Caco-2 (cell line): ENCODE measurements at regions of chr12 and their contacts with region 1.

Region 1: DNA sequence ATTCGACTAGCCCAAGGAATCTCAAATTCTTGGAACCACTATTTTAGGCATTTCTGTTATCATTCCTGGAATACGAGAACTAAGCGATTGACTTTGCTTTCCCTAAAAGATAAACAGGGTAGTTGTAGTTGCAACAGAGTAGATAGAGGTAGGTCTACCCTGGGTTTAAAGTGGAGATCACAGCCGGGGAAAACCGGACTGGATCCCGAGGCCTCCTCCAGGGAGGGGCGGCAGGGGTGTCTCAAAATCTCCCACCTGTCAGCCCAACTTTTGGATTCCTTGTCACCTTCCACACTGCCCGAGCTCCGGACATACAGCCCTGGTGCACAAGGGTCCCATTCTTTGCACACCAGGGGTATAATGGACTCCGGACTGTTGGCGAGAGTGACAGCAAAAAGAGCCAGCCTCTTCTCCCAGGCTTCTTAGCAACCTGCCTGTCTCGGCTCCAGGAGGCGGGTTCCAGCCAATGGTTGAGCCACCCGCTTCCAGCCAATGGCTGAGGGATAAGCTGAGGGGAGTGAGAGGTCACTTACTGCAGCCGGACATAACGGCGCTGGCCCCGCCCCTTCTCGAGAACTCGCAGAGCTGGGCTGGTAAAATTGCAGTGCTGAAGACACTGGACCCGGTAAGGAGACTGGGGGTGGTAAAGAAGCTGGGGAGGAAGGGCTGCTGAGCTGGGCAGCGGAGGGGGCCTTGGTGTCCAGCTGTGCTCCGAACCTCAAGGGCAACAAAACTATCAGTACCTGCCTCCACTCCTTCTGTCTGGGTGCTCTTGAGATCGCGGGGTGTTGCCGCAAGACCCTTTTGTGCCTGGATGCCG is at the start of gene SUOX:
- DNase-seq: peak; percentile 97 to 98
- H3K4me3 ChIP-seq: peak within 1 kb of the TSS; percentile 58
- H3K4me3 Mint-ChIP-seq: peak within 1 kb of the TSS; percentile 98
- H3K27ac Mint-ChIP-seq: peak within 1 kb of the TSS; percentile 87
- H3K4me1 ChIP-seq: peaks cover 9% of the 10 kb centered on the region
- H3K4me1 Mint-ChIP-seq: peaks cover 15% of the 10 kb centered on the region
- H3K27me3 ChIP-seq: no peaks in the 10 kb centered on the region
- H3K27me3 Mint-ChIP-seq: no peaks in the 10 kb centered on the region
- CTCF ChIP-seq: no peak
- total RNA-seq, gene SUOX: 37.9 and 40.8 TPM in 2 replicates

Region 2: GRCh38 chr12:55258303-55258702 is 738.6 kb before region 1 on chr12:
- CTCF ChIA-PET with region 1: no interaction called
- POLR2A ChIA-PET with region 1: no interaction called
- intact Hi-C with region 1: no loop called
- DNase-seq: no peak
- H3K4me3 ChIP-seq: no peak overlapping the region
- H3K4me3 Mint-ChIP-seq: no peak overlapping the region
- H3K27ac Mint-ChIP-seq: no peak overlapping the region
- H3K4me1 ChIP-seq: no peaks in the 10 kb centered on the region
- H3K4me1 Mint-ChIP-seq: no peaks in the 10 kb centered on the region
- H3K27me3 ChIP-seq: no peaks in the 10 kb centered on the region
- H3K27me3 Mint-ChIP-seq: no peaks in the 10 kb centered on the region
- CTCF ChIP-seq: no peak

Region 3: DNA sequence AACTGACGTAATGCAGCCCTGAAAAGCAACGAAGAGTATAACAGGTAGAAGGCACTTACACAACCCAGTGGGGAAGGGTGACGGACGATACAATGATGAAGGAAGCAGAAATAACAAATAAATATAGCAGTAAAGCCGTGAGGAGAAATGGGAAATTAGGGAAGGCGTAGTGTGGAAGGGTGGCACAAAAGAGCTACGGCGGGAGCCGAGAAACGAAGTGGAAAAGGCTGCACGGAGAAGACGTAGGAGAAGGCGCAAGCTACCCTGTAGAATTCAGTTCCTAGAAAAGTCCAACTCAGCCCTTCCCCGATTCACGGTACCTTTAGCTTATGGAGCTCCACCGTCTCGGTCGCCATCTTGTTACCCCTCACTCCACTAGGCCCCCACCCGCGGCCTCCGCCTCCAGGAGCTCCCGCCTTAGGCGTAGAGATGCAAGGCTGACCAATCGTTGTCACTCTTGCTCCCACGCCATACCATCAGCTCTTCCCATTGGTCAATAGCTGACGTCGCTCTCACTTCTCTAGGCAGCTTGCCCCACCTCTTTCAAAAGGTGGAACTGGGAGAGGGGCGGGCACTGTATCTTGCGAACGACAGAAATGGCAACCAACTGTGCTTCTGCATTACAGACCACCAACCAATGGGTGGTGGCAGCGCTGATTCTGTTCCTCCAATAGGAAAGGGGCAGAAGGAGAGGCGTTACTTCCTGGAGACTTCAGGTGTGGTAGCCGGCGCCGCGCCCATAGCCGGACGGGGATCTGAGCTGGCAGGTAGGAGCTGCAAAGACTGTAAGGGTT is 179.4 kb before region 1 on chr12 and contains the starts of genes ORMDL2 and SARNP:
- CTCF ChIA-PET with region 1: interaction called, 5 read pairs
- POLR2A ChIA-PET with region 1: interaction called, 10 read pairs
- intact Hi-C with region 1: no loop called
- DNase-seq: peak; percentile 97 to 99
- H3K4me3 ChIP-seq: peak within 1 kb of the TSS; percentile 83
- H3K4me3 Mint-ChIP-seq: no peak within 1 kb of the TSS
- H3K27ac Mint-ChIP-seq: no peak within 1 kb of the TSS
- H3K4me1 ChIP-seq: peaks cover 7% of the 10 kb centered on the region; the same call in 1 of the 2 replicates
- H3K4me1 Mint-ChIP-seq: peaks cover 30% of the 10 kb centered on the region
- H3K27me3 ChIP-seq: no peaks in the 10 kb centered on the region
- H3K27me3 Mint-ChIP-seq: no peaks in the 10 kb centered on the region
- CTCF ChIP-seq: no peak
- total RNA-seq, gene ORMDL2: 44.0 and 48.3 TPM in 2 replicates
- total RNA-seq, gene SARNP: 70.9 and 77.6 TPM in 2 replicates

Region 4: DNA sequence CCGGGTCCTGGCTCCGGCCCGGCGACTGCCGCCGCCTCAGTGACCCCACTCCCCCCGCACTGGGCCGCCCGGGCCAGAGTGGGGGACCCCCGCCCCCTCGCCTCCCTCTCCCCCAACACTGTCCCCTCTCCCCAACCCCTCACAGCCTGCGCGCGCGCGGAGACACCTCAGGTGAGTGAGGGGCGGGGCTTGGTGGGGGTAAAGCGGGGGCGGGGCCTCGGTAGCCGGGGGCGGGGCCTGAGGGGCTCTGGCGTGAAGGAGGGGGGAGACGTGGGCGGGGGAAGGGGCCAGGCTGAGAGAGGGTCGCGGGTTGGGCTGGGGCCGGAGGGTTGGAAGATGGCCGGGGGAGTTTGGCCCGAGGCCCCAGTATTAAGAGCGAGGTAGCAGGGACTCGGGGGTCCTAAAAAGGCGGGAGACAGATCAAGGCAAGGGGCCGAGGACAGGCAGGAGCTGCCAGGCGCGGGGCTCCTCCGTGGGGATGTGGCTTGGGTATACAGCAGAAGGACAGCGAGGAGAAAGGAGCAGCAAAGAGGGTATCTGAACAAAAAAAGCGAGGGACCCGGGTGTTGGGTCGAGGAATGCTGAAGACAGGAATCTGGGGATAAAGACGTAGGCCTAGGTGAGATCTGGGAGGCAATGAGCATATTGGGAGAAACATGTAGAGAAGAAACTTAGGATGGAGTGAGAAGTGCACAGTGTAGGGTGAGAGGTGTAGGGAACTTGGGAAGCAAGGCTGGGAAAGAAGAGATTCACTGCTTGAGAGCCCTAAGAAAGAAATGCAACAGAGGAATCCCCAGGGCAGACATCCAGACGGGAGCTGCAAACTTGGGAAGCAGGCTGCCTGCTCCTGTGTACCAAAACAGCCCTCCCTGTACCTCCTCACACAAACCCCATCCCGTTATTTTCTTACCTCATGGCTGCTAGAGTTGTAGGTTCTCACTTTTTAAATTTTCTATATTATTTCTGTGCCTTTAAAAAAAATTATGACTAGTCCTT is 10.9 kb after region 1 on chr12:
- CTCF ChIA-PET with region 1: interaction called, 20 read pairs
- POLR2A ChIA-PET with region 1: interaction called, 9 read pairs
- intact Hi-C with region 1: loop called (anchors 1 kb)
- DNase-seq: peak; percentile 75 to 81
- H3K4me3 ChIP-seq: peak overlapping the region; percentile 52
- H3K4me3 Mint-ChIP-seq: peak overlapping the region; percentile 93
- H3K27ac Mint-ChIP-seq: peak overlapping the region; percentile 82
- H3K4me1 ChIP-seq: peaks cover 54% of the 10 kb centered on the region
- H3K4me1 Mint-ChIP-seq: peaks cover 59% of the 10 kb centered on the region
- H3K27me3 ChIP-seq: no peaks in the 10 kb centered on the region
- H3K27me3 Mint-ChIP-seq: no peaks in the 10 kb centered on the region
- CTCF ChIP-seq: no peak

Region 5: GRCh38 chr12:56029666-56030293 is 32.9 kb after region 1 on chr12:
- CTCF ChIA-PET with region 1: interaction called, 97 read pairs
- POLR2A ChIA-PET with region 1: interaction called, 14 read pairs
- intact Hi-C with region 1: loop called (anchors 1 kb)
- DNase-seq: peak; percentile 64 to 78
- H3K4me3 ChIP-seq: no peak overlapping the region
- H3K4me3 Mint-ChIP-seq: peak overlapping the region; percentile 7
- H3K27ac Mint-ChIP-seq: peak overlapping the region; percentile 67
- H3K4me1 ChIP-seq: peaks cover 16% of the 10 kb centered on the region
- H3K4me1 Mint-ChIP-seq: peaks cover 16% of the 10 kb centered on the region
- H3K27me3 ChIP-seq: no peaks in the 10 kb centered on the region
- H3K27me3 Mint-ChIP-seq: no peaks in the 10 kb centered on the region
- CTCF ChIP-seq: peak; percentile 78 to 86

Region 6: DNA sequence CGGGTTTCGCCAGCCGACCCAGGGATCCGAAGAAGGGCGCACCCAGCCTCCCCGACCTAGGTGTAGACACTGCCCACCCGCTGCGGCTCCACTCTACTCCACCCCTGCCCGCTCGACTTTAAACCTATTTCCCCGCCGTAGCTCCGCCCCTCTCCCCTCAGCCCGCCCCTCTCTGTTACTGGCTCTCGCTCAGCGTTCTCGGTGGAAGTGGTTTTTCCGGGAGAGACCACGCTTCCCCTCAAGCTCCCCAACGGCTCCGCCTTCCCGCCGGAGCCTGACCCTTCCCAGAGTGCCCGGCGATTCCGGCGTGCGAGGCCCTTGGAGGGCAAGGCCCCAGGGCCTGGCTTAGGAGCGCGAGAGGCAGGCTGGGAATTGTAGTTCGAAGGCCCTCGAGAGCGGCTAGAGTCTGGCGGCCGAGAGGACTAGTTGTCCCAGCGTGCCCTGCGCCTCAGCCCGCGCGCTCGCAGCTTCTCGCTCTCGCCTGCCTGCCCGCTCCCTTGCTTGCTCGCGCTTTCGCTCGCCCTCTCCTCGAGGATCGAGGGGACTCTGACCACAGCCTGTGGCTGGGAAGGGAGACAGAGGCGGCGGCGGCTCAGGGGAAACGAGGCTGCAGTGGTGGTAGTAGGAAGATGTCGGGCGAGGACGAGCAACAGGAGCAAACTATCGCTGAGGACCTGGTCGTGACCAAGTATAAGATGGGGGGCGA is 107.3 kb after region 1 on chr12 and contains the start of gene PA2G4:
- CTCF ChIA-PET with region 1: interaction called, 6 read pairs
- POLR2A ChIA-PET with region 1: interaction called, 12 read pairs
- intact Hi-C with region 1: no loop called
- DNase-seq: peak; percentile 99
- H3K4me3 ChIP-seq: peak within 1 kb of the TSS; percentile 68
- H3K4me3 Mint-ChIP-seq: peak within 1 kb of the TSS; percentile 98
- H3K27ac Mint-ChIP-seq: peak within 1 kb of the TSS; percentile 99
- H3K4me1 ChIP-seq: peaks cover 22% of the 10 kb centered on the region
- H3K4me1 Mint-ChIP-seq: peaks cover 9% of the 10 kb centered on the region
- H3K27me3 ChIP-seq: no peaks in the 10 kb centered on the region; the same call in 1 of the 2 replicates
- H3K27me3 Mint-ChIP-seq: no peaks in the 10 kb centered on the region
- CTCF ChIP-seq: no peak
- total RNA-seq, gene PA2G4: 178 and 190 TPM in 2 replicates

Region 7: GRCh38 chr12:56420411-56420810 is 423.5 kb after region 1 on chr12:
- CTCF ChIA-PET with region 1: no interaction called
- POLR2A ChIA-PET with region 1: no interaction called
- intact Hi-C with region 1: no loop called
- DNase-seq: no peak
- H3K4me3 ChIP-seq: no peak overlapping the region
- H3K4me3 Mint-ChIP-seq: no peak overlapping the region
- H3K27ac Mint-ChIP-seq: no peak overlapping the region
- H3K4me1 ChIP-seq: no peaks in the 10 kb centered on the region
- H3K4me1 Mint-ChIP-seq: no peaks in the 10 kb centered on the region
- H3K27me3 ChIP-seq: no peaks in the 10 kb centered on the region
- H3K27me3 Mint-ChIP-seq: no peaks in the 10 kb centered on the region
- CTCF ChIP-seq: no peak